CD14-positive monocyte (primary cell): ENCODE measurements at regions of chr11 and their contacts with region 1.

Region 1: GRCh38 chr11:848380-848931 is 5.8 kb downstream of the TSPAN4 start:
- DNase-seq: peak; percentile 30 to 51 (median 47)
- H3K4me3 ChIP-seq: peak overlapping the region in 1 of 3 experiments; percentile 68
- H3K4me3 Mint-ChIP-seq: peak overlapping the region; percentile 49 to 86
- H3K27ac ChIP-seq: no peak overlapping the region
- H3K27ac Mint-ChIP-seq: no peak overlapping the region
- H3K4me1 ChIP-seq: peaks cover 33 to 51% of the 10 kb centered on the region in 2 donors
- H3K4me1 Mint-ChIP-seq: peaks cover 30% of the 10 kb centered on the region
- H3K27me3 ChIP-seq: peaks cover 6 to 24% of the 10 kb centered on the region in 2 donors
- H3K27me3 Mint-ChIP-seq: peaks cover 12 to 45% (median 30%) of the 10 kb centered on the region in 3 donors
- CTCF ChIP-seq: peak; percentile 97

Region 2: DNA sequence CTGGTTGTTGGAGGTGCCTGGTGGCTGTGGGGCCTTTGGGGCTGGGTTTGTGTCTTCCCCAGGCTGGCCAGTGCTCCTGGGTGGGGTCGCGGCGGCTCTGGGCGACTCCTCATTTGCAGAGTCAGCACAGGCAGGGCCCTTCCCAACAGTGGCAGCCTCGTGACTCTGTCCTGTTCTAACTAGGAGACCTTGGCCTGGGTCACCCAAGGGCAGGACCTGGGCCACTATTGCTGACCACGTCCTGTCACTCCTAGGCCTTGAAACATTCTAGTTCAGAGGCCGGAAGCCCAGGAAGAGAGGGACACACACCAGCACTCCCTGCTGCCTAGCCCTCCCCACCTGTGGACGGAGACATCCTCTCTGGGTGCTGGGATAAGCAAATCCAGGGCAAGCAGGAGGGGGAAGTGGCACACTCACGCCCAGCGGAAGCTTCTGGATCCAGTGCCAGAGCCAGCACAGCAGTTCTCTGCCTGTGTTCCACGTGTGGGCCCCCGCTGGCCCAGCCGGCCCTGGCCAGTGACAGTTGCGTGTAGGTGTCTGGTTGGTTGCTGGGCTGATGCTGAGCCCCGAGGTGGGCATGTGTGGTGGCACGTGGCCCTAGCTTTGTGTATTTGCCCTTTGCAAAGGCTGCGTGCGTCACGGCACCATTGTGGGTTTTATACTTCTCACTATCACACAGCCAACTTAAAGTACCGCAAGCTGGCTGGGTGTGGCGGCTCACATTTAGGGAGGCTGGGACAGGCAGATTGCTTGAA is 66.5 kb after region 1 on chr11:
- intact Hi-C with region 1: loop called in 1 of 2 experiments (anchors 5 kb)
- DNase-seq: no peak
- H3K4me3 ChIP-seq: no peak overlapping the region
- H3K4me3 Mint-ChIP-seq: no peak overlapping the region
- H3K27ac ChIP-seq: no peak overlapping the region
- H3K27ac Mint-ChIP-seq: no peak overlapping the region
- H3K4me1 ChIP-seq: peaks cover 15 to 41% of the 10 kb centered on the region in 2 donors
- H3K4me1 Mint-ChIP-seq: peaks cover 28% of the 10 kb centered on the region
- H3K27me3 ChIP-seq: no peaks in the 10 kb centered on the region
- H3K27me3 Mint-ChIP-seq: no peaks in the 10 kb centered on the region
- CTCF ChIP-seq: no peak

Region 3: GRCh38 chr11:925496-926321 is 77.3 kb after region 1 on chr11 and contains the start of gene AP2A2:
- intact Hi-C with region 1: loop called in 1 of 2 experiments (anchors 5 kb)
- DNase-seq: peak; percentile 84 to 92 (median 86)
- H3K4me3 ChIP-seq: peak within 1 kb of the TSS; percentile 66 to 81 (median 76)
- H3K4me3 Mint-ChIP-seq: peak within 1 kb of the TSS; percentile 81 to 89
- H3K27ac ChIP-seq: peak within 1 kb of the TSS in 1 of 2 donors; percentile 67
- H3K27ac Mint-ChIP-seq: peak within 1 kb of the TSS in 6 of 7 donors; percentile 2 to 85 (median 52)
- H3K4me1 ChIP-seq: peaks cover 13 to 15% of the 10 kb centered on the region in 2 donors
- H3K4me1 Mint-ChIP-seq: peaks cover 22% of the 10 kb centered on the region
- H3K27me3 ChIP-seq: no peaks in the 10 kb centered on the region
- H3K27me3 Mint-ChIP-seq: no peaks in the 10 kb centered on the region
- CTCF ChIP-seq: peak; percentile 92
- polyA plus RNA-seq, gene AP2A2: 5.7 to 61.0 (median 8.2) TPM

Region 4: GRCh38 chr11:1050581-1051355 is 202.3 kb after region 1 on chr11:
- intact Hi-C with region 1: loop called (anchors 2 kb)
- DNase-seq: peak; percentile 31 to 41 (median 36)
- H3K4me3 ChIP-seq: no peak overlapping the region
- H3K4me3 Mint-ChIP-seq: no peak overlapping the region
- H3K27ac ChIP-seq: no peak overlapping the region
- H3K27ac Mint-ChIP-seq: no peak overlapping the region
- H3K4me1 ChIP-seq: no peaks in the 10 kb centered on the region
- H3K4me1 Mint-ChIP-seq: peaks cover 7% of the 10 kb centered on the region
- H3K27me3 ChIP-seq: peaks cover 0 to 6% of the 10 kb centered on the region in 2 donors
- H3K27me3 Mint-ChIP-seq: peaks cover 17 to 27% (median 23%) of the 10 kb centered on the region in 3 donors
- CTCF ChIP-seq: peak; percentile 78